GM23248 (cell line): ENCODE measurements at regions of chr7 and their contacts with region 1.

Region 1: DNA sequence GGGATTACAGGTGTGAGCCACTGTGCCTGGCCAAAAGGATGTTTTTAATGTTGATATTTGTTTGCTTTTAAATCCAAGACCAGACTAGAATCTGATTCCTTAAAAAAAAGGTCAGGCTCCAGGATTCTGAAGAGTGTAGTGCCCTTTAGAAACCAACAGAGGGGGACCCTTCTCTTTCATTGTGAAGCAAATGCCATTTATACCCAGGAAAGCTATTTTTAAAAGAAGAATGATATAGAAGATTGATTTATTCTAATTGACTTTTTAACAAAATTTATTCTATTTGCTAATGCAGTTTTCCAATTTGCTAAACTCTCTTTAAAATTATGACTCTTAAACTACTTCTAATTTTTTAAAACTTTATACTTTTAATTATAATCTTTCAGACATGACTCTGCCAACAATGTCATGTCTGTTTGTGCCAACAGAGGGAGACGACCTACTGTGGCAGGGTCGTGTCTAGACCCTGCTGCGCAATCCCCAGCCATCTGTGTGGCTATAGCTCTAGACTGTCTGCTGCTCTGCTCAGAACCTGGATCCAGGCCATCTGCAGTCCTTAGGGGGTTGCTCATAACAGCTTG is 201.0 kb upstream of the IMMP2L start:
- DNase-seq: peak; percentile 77
- H3K4me3 ChIP-seq: no peak overlapping the region
- H3K27ac ChIP-seq: no peak overlapping the region
- H3K4me1 ChIP-seq: no peaks in the 10 kb centered on the region
- H3K27me3 ChIP-seq: no peaks in the 10 kb centered on the region

Region 2: DNA sequence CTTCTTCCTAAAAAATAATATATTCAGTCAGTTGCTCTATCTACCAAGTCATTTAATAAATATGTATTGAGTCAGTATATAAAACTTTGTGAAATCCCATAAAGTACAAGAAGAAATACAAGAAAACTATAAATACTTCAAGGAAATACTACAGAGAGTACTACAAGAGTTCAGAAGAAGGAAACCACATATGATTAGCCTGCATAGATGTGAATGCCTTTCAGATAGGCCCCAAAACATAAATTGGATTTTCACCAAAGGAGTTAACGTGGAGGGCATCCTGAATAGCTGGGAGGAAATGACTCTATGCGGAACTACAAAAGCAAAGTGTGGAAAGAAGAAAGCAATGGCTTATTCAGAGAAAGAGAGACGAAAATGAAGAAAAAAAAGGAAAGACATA is 552.3 kb before region 1 on chr7:
- in situ Hi-C with region 1: no loop called
- DNase-seq: peak; percentile 51
- H3K4me3 ChIP-seq: no peak overlapping the region
- H3K27ac ChIP-seq: peak overlapping the region; percentile 7; the same call in 1 of the 2 replicates
- H3K4me1 ChIP-seq: peaks cover 11% of the 10 kb centered on the region; the same call in 1 of the 2 replicates
- H3K27me3 ChIP-seq: no peaks in the 10 kb centered on the region

Region 3: GRCh38 chr7:111846898-111847297 is 83.6 kb after region 1 on chr7:
- in situ Hi-C with region 1: loop called (anchors 5 kb)
- DNase-seq: no peak
- H3K4me3 ChIP-seq: no peak overlapping the region
- H3K27ac ChIP-seq: no peak overlapping the region
- H3K4me1 ChIP-seq: peaks cover 4% of the 10 kb centered on the region
- H3K27me3 ChIP-seq: no peaks in the 10 kb centered on the region

Region 4: DNA sequence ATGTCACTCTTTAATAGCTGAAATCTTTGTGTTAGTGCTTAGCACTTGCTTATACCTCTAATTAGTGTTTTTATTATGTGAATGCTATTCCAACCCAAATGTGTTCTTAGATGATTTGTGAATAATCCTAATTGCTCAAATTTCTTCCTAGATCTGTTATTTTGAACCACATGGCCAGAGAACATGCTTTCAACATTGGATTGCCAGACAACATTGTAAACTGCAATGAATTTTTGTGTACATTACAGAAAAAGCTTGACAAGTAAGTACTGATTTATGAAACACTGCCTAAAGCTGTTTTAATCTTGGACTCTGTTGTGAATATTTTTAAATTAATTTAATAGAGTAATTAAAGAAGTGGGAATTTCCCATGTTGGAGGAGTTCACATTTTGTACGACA is 564.3 kb after region 1 on chr7:
- in situ Hi-C with region 1: no loop called
- DNase-seq: no peak
- H3K4me3 ChIP-seq: no peak overlapping the region
- H3K27ac ChIP-seq: no peak overlapping the region
- H3K4me1 ChIP-seq: no peaks in the 10 kb centered on the region
- H3K27me3 ChIP-seq: no peaks in the 10 kb centered on the region